ENCODE measurements at regions of chr14 and their contacts with region 1.

Region 1: GRCh38 chr14:29078810-29079522 is 312.4 kb downstream of the FOXG1 start:
- DNase-seq: no peak
- H3K4me3 ChIP-seq: no peak overlapping the region
- H3K27ac ChIP-seq: no peak overlapping the region
- H3K4me1 ChIP-seq: no peaks in the 10 kb centered on the region
- H3K27me3 ChIP-seq: no peaks in the 10 kb centered on the region
- CTCF ChIP-seq: no peak
- POLR2A ChIP-seq: no peak

Region 2: DNA sequence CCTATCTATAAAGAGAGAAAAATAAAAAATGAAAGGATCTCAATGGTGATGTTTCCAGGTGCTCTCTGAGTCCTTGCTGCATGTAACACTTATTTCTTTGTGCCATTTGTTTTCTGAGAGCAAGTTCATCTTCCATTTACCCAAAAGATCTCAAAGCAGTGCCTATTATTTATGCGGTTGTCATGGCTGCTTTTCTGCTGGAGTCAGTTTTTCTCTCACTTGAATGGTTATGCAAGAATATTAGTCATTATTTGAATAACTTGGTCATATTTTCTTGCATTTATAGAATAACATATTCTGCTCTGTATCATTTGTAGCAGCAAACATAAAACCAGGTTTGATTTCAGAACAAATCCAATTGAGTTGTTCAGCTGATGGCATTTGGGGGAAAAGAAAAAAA is 1338.2 kb after region 1 on chr14:
- intact Hi-C with region 1: loop called (anchors 5 kb)
- DNase-seq: no peak
- H3K4me3 ChIP-seq: no peak overlapping the region
- H3K27ac ChIP-seq: no peak overlapping the region
- H3K4me1 ChIP-seq: no peaks in the 10 kb centered on the region
- H3K27me3 ChIP-seq: no peaks in the 10 kb centered on the region
- CTCF ChIP-seq: no peak
- POLR2A ChIP-seq: no peak